ENCODE measurements at regions of chr12 and their contacts with region 1.

Region 1: DNA sequence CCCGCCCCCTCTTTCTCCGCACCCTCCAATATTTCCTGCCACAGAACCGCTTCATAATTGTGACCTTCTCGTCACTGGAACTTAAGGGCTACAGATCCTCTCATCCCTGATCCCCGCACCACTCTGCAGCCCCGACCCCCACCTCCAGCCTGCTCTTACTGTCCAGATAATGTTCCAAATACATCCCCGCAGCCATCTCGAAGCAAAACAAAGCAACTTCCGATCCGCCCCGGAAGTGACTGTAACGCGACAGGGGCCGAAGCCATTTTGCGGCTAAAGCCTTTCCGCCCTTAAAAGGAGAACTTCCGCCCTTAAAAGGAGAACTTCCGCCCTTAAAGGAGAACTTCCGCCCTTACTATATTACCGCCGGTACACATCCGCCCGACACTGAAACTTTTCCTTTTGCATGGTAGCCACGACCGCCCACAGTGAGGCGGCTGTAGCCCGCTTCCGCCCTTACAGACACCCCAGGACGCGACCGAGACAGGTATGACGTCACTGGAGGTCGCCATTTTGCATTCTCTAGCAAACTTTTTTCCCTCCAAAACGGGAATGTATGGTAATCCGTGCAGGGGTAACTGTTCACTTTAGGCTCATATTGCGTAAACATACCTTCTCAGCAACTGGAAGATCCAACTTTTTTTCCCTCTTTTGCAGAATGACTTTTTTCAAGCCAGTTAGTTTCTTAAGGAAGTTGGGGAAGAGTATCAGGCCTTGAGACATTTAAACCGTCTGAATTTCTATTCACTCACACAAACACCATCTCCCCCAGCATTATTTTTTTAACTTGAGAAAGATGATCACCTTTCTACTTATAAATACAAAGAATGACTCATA is at the start of gene ING4:
- DNase-seq: peak; percentile 98
- H3K4me3 Mint-ChIP-seq: peak within 1 kb of the TSS; percentile 91
- H3K27ac Mint-ChIP-seq: peak within 1 kb of the TSS; percentile 83
- H3K4me1 Mint-ChIP-seq: peaks cover 22% of the 10 kb centered on the region
- H3K27me3 Mint-ChIP-seq: no peaks in the 10 kb centered on the region
- total RNA-seq, gene ING4: 13.8 to 15.2 TPM

Region 2: DNA sequence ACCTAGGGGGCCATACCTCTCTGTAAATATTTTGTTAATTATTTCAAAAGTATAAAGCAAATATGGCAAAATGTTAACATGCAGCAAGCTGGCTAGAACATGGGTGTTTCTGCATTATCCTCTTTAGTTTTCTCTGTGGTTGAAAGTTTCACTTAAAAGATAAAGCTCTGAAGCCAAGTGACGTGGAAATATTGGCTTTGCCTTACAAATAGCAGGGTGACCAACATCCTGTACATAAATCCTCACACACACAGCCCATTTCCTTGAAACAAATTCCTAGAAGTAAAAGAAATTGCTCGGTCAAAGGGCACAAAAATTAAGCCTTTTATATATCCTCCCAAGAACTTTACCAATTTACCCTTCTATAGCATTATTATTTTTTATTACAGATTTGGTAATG is 528.1 kb before region 1 on chr12:
- CTCF ChIA-PET with region 1: no interaction called
- POLR2A ChIA-PET with region 1: no interaction called
- intact Hi-C with region 1: no loop called
- DNase-seq: no peak
- H3K4me3 Mint-ChIP-seq: no peak overlapping the region
- H3K27ac Mint-ChIP-seq: no peak overlapping the region
- H3K4me1 Mint-ChIP-seq: peaks cover 6% of the 10 kb centered on the region
- H3K27me3 Mint-ChIP-seq: no peaks in the 10 kb centered on the region

Region 3: GRCh38 chr12:6493497-6494257 is 169.4 kb before region 1 on chr12 and contains the start of gene NCAPD2:
- CTCF ChIA-PET with region 1: no interaction called
- POLR2A ChIA-PET with region 1: no interaction called
- intact Hi-C with region 1: loop called (anchors 1 kb)
- DNase-seq: peak; percentile 98
- H3K4me3 Mint-ChIP-seq: peak within 1 kb of the TSS; percentile 94
- H3K27ac Mint-ChIP-seq: peak within 1 kb of the TSS; percentile 100
- H3K4me1 Mint-ChIP-seq: peaks cover 38% of the 10 kb centered on the region
- H3K27me3 Mint-ChIP-seq: no peaks in the 10 kb centered on the region
- total RNA-seq, gene NCAPD2: 192 to 196 TPM

Region 4: DNA sequence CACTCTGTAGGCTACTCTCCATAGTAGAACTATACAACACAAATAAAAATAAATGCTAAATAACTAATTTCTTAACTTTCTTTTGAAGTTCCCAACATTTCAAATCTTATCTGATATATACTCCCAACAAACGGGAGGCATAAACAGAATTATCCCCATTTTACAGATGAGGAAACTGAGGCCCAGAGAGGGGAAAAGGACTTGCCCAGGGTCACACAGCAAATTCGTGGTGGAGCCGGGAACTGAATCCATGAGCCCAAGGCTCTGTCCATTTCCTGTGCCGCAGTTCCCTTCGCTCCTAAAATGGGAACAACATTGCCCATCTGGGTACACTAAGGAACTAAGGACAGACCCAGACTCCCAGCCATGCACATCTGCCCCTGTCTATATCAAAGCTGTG is 13.8 kb after region 1 on chr12:
- CTCF ChIA-PET with region 1: no interaction called
- POLR2A ChIA-PET with region 1: no interaction called
- intact Hi-C with region 1: no loop called
- DNase-seq: no peak
- H3K4me3 Mint-ChIP-seq: no peak overlapping the region
- H3K27ac Mint-ChIP-seq: no peak overlapping the region
- H3K4me1 Mint-ChIP-seq: peaks cover 6% of the 10 kb centered on the region
- H3K27me3 Mint-ChIP-seq: no peaks in the 10 kb centered on the region